ENCODE measurements at regions of chr15 and their contacts with region 1.

Region 1: DNA sequence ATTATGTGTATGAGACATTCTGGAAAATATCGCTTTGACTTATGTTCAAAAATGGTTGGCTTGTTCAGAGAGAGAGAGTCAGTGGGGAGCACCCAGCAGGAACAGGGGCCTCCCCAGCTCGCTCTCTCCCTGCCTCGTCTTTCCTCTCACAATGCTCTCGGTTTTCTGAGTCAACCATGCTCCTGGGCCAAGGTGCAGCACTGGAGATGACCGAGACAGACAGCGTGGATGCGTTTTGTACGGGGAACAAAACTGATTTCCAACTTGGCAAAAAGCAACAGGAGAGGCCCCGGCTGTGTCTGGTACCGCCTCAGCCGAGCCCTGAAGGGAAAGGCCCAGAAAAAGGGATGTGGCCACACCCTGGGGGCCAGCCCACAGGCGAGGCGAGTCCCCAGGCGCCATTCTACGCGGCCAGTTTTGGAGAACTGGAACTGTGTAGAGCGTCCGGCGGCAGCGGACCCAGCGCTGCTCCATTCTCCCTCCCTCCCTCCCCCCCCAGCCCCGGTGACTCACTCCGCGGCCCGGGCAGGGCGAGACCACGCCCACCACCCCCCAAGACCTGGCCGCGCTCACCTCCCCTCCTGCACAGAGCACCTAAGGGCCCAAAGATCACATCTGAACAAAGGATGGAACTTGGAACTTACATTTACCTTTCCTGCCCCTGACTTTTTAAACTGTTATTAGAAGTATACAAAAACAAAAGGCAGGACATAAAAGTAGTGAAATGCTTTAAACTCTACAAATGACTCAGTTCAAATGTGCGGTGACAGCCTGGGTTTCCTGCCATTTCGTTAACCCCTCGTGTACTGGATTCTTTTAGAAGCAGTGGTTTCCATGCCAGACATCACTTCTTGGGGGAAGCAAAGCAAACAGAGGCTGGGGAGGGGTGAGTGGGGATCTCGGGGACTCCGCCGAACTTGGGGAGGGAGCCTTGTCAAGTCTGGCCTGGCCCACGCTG is 12.7 kb downstream of the ATP10A start:
- DNase-seq: peak; percentile 58
- H3K4me3 Mint-ChIP-seq: peak overlapping the region; percentile 93
- H3K27ac Mint-ChIP-seq: peak overlapping the region; percentile 100
- H3K4me1 Mint-ChIP-seq: peaks cover 89% of the 10 kb centered on the region
- H3K27me3 Mint-ChIP-seq: no peaks in the 10 kb centered on the region

Region 2: GRCh38 chr15:25372298-25372697 is 478.1 kb before region 1 on chr15:
- intact Hi-C with region 1: loop called (anchors 10 kb)
- DNase-seq: no peak
- H3K4me3 Mint-ChIP-seq: no peak overlapping the region
- H3K27ac Mint-ChIP-seq: no peak overlapping the region
- H3K4me1 Mint-ChIP-seq: no peaks in the 10 kb centered on the region
- H3K27me3 Mint-ChIP-seq: no peaks in the 10 kb centered on the region

Region 3: GRCh38 chr15:25671132-25671531 is 179.3 kb before region 1 on chr15:
- intact Hi-C with region 1: no loop called
- DNase-seq: no peak
- H3K4me3 Mint-ChIP-seq: no peak overlapping the region
- H3K27ac Mint-ChIP-seq: no peak overlapping the region
- H3K4me1 Mint-ChIP-seq: peaks cover 8% of the 10 kb centered on the region
- H3K27me3 Mint-ChIP-seq: peaks cover 15% of the 10 kb centered on the region

Region 4: GRCh38 chr15:25811481-25811906 is 38.9 kb before region 1 on chr15:
- intact Hi-C with region 1: loop called (anchors 1 kb)
- DNase-seq: no peak
- H3K4me3 Mint-ChIP-seq: peak overlapping the region; percentile 74
- H3K27ac Mint-ChIP-seq: peak overlapping the region; percentile 81
- H3K4me1 Mint-ChIP-seq: peaks cover 62% of the 10 kb centered on the region
- H3K27me3 Mint-ChIP-seq: no peaks in the 10 kb centered on the region

Region 5: DNA sequence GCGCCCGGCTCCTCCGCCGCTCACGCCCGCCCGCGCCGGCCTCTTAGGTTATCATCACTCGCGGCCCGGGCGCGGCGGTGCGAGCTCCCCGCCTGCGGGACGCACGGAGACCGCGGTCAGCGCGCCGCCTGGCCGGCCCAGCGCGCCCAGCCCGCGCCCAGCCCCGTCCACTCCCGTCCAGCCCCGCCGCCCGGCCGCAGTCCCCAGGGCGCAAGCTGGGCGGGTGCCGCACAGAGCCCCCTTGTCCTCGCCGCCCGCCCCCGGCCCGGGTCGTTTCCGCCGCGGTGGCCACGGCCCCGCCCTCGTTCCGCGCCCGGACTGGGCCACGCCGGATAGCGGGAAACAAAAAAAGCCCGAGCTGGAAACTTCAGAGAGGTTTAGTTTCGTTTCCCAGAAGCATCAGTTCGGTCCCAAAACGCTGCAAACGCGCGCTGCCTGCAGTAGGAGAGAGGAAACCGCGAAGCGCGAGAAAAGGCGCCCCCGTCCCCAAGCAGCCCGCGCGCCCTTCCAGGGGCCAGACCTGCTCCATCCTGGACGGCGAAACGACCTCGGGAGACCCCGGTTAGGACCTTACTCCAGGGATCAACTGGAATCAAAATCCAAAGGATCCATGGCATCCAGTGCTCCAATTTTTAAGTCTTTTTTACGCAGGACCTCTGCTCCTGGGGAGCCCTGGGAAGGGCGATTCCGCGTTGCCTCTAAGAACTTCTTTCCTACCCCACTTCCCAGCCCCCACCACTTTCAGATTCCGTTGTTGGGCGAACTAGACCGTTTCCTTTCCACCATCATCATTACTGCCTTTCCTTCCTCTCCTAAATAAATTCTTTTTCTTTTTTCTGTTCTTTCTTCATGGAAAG is 12.9 kb after region 1 on chr15 and contains the start of gene ATP10A:
- intact Hi-C with region 1: loop called (anchors 1 kb)
- DNase-seq: peak; percentile 68
- H3K4me3 Mint-ChIP-seq: peak within 1 kb of the TSS; percentile 95
- H3K27ac Mint-ChIP-seq: peak within 1 kb of the TSS; percentile 91
- H3K4me1 Mint-ChIP-seq: peaks cover 52% of the 10 kb centered on the region
- H3K27me3 Mint-ChIP-seq: peaks cover 9% of the 10 kb centered on the region
- total RNA-seq, gene ATP10A: 42.8 and 47.9 TPM in 2 replicates